Common myeloid progenitor, CD34-positive (primary cell): ENCODE measurements at regions of chr4 and their contacts with region 1.

Region 1: GRCh38 chr4:8198906-8199593 is at the start of gene SH3TC1:
- DNase-seq: peak; percentile 83 to 95 (median 93)
- H3K4me3 ChIP-seq: peak within 1 kb of the TSS; percentile 42 to 88 (median 80)
- H3K27ac ChIP-seq: peak within 1 kb of the TSS; percentile 46 to 81
- H3K4me1 ChIP-seq: peaks cover 4 to 89% (median 73%) of the 10 kb centered on the region in 4 experiments
- H3K27me3 ChIP-seq: no peaks in the 10 kb centered on the region

Region 2: DNA sequence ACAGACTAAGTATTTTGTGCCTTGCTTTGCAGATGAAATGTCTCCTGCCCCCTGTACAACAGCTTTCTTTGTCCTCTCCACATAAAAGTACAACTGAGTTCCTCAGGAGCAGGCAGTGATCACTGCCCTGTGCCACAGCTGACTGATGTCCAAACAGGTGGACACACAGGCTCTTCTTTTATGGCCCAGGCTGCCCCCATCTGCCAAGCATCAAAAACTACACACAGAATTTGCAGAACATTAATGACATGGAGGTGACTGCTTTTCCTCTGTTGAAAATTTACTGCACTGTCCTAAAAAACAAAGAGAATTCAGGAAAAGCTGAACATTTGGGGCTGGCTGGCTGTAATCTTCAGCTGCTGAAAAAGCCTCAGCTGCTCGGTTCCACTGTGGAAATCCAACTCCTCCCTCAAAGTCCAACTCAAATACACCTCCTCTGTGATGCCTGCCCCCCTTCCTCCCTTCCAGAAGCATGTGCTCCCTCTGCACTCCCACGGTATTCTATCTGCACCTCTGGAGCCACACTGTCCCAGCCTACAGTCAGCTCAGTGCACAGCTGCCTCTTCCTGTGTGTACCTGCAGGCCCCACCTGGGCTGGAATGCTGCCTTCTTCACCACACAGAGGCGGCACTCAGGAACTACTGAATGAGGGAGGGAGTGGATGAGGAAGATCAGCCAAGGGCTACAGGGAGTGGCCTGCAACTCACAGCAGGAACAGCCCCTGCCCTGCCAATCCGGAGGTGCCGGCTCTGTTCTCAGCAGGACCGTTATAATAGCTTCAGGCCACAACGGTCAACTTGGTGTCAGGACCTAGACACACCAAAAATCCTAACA is 269.7 kb before region 1 on chr4:
- CTCF ChIA-PET with region 1: no interaction called
- POLR2A ChIA-PET with region 1: no interaction called
- DNase-seq: no peak
- H3K4me3 ChIP-seq: no peak overlapping the region
- H3K27ac ChIP-seq: no peak overlapping the region
- H3K4me1 ChIP-seq: no peaks in the 10 kb centered on the region
- H3K27me3 ChIP-seq: peaks cover 10 to 73% (median 15%) of the 10 kb centered on the region in 5 experiments

Region 3: GRCh38 chr4:8044699-8045098 is 154.4 kb before region 1 on chr4:
- CTCF ChIA-PET with region 1: no interaction called
- POLR2A ChIA-PET with region 1: no interaction called
- DNase-seq: peak in 1 of 3 donors; percentile 2
- H3K4me3 ChIP-seq: no peak overlapping the region
- H3K27ac ChIP-seq: no peak overlapping the region
- H3K4me1 ChIP-seq: no peaks in the 10 kb centered on the region
- H3K27me3 ChIP-seq: peaks cover 0 to 97% (median 25%) of the 10 kb centered on the region in 5 experiments

Region 4: GRCh38 chr4:8218371-8219031 is 19.5 kb after region 1 on chr4:
- CTCF ChIA-PET with region 1: interaction called, 12 read pairs
- POLR2A ChIA-PET with region 1: interaction called, 5 read pairs
- DNase-seq: no peak
- H3K4me3 ChIP-seq: no peak overlapping the region
- H3K27ac ChIP-seq: no peak overlapping the region
- H3K4me1 ChIP-seq: peaks cover 6 to 35% (median 25%) of the 10 kb centered on the region in 4 experiments
- H3K27me3 ChIP-seq: no peaks in the 10 kb centered on the region